ENCODE measurements at regions of chr1 and their contacts with region 1.

Region 1: GRCh38 chr1:229293528-229294204 is 22.8 kb downstream of the RAB4A start:
- DNase-seq: no peak
- ATAC-seq: no peak
- H3K4me3 ChIP-seq: no peak overlapping the region
- H3K27ac ChIP-seq: no peak overlapping the region
- H3K4me1 ChIP-seq: peaks cover 16 to 19% of the 10 kb centered on the region in 2 donors
- H3K27me3 ChIP-seq: no peaks in the 10 kb centered on the region
- CTCF ChIP-seq: no peak
- POLR2A ChIP-seq: no peak

Region 2: GRCh38 chr1:229645324-229645993 is 351.8 kb after region 1 on chr1:
- in situ Hi-C with region 1: no loop called
- intact Hi-C with region 1: loop called (anchors 5 kb)
- DNase-seq: no peak
- ATAC-seq: no peak
- H3K4me3 ChIP-seq: no peak overlapping the region
- H3K27ac ChIP-seq: no peak overlapping the region
- H3K4me1 ChIP-seq: peaks cover 10 to 18% of the 10 kb centered on the region in 2 donors
- H3K27me3 ChIP-seq: no peaks in the 10 kb centered on the region
- CTCF ChIP-seq: no peak
- POLR2A ChIP-seq: no peak

Measured in gastrocnemius medialis (tissue), 4 donors.